Naive thymus-derived CD4-positive, alpha-beta T cell (primary cell): ENCODE measurements at regions of chr1 and their contacts with region 1.

Region 1: DNA sequence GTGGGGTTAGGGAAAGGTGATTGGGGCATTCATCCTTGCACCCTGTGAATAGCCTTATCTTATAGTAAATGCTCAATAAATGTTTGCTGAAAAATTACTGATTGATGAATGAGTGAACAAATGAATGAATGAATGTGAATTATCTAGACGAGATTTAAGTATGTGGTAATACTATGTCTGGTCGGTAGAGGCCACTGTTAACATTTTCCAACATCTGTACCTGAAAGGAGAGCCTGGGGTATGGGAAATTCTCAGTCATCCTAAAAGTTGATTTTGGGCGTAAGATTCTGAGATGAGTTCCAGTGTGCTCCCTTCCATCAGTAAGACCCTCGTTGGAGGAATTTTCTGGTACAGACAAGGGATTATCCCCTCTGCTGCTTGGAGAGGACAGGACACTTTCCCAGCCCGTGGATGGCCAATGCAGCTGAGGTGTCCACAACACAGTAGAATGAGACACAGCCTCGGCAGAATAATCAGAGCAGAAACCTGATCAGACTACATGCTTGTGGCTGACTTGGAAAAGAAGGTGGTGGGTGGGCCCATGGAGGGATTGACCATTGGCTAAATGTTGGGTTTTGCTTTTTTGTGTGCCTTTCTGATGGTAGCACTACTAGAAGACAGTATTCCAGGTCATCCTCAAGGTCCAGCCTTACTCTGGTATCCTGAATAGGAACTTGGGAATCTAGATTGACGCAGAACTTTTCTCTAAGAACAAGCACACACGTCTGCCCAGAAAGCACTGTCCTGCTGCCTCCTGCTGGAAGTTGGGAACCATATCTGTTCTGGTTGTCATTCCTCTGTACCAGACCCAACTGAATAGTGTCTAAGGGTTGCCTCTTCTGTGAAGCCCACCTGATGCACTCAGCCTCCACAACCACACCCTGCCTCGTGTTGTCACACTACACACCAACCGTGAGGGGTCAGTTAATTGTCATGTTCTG is 262.0 kb downstream of the TNR start:
- DNase-seq: no peak
- ATAC-seq: no peak
- H3K4me3 ChIP-seq: no peak overlapping the region
- H3K4me3 Mint-ChIP-seq: no peak overlapping the region
- H3K27ac ChIP-seq: no peak overlapping the region
- H3K27ac Mint-ChIP-seq: no peak overlapping the region
- H3K4me1 ChIP-seq: no peaks in the 10 kb centered on the region
- H3K4me1 Mint-ChIP-seq: no peaks in the 10 kb centered on the region
- H3K27me3 ChIP-seq: no peaks in the 10 kb centered on the region
- H3K27me3 Mint-ChIP-seq: peaks cover 10 to 30% (median 22%) of the 10 kb centered on the region in 5 donors

Region 2: GRCh38 chr1:175471039-175471800 is 10.2 kb before region 1 on chr1:
- CTCF ChIA-PET with region 1: no interaction called
- POLR2A ChIA-PET with region 1: no interaction called
- intact Hi-C with region 1: no loop called
- DNase-seq: no peak
- ATAC-seq: no peak
- H3K4me3 ChIP-seq: no peak overlapping the region
- H3K4me3 Mint-ChIP-seq: no peak overlapping the region
- H3K27ac ChIP-seq: no peak overlapping the region
- H3K27ac Mint-ChIP-seq: no peak overlapping the region
- H3K4me1 ChIP-seq: no peaks in the 10 kb centered on the region
- H3K4me1 Mint-ChIP-seq: no peaks in the 10 kb centered on the region
- H3K27me3 ChIP-seq: no peaks in the 10 kb centered on the region
- H3K27me3 Mint-ChIP-seq: peaks cover 26 to 56% (median 38%) of the 10 kb centered on the region in 5 donors

Region 3: DNA sequence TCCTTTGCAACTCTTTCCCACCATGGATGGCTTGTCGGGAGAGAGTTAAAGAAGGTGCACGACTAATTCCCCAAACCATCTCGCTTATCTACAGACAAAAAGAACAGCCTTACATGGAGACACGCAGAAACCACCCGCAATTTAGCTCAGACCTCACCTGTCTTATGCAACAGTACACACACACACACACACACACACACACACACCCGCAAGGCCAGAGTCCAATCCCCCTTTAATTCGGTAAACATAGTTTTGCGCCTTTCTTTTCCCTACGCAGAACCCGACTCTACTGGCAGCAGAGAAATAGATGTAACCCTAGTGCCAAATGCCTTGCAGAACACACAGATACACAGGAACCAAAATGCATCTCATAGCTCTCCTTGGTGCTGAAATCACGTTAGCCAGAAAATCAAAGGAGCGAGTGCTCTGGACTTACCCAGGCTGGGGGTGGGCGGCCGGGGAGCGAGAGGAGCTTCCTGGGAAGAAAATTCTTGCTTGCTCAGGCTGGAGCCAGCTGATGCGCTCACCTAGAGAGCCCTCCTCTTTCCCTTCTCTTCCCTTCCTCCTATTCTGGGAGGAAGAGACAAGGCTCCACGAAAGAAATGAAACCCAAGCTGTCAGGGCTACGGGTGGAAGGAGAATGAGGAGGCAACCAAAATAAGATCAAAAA is 261.5 kb after region 1 on chr1:
- CTCF ChIA-PET with region 1: no interaction called
- POLR2A ChIA-PET with region 1: no interaction called
- intact Hi-C with region 1: loop called in 1 of 2 experiments (anchors 2 kb)
- DNase-seq: no peak
- ATAC-seq: no peak
- H3K4me3 ChIP-seq: no peak overlapping the region
- H3K4me3 Mint-ChIP-seq: no peak overlapping the region
- H3K27ac ChIP-seq: no peak overlapping the region
- H3K27ac Mint-ChIP-seq: no peak overlapping the region
- H3K4me1 ChIP-seq: no peaks in the 10 kb centered on the region
- H3K4me1 Mint-ChIP-seq: peaks cover 0 to 2% (median 0%) of the 10 kb centered on the region in 7 donors
- H3K27me3 ChIP-seq: no peaks in the 10 kb centered on the region
- H3K27me3 Mint-ChIP-seq: peaks cover 23 to 53% (median 42%) of the 10 kb centered on the region in 5 donors

Region 4: GRCh38 chr1:175757381-175758015 is 276.1 kb after region 1 on chr1:
- CTCF ChIA-PET with region 1: no interaction called
- POLR2A ChIA-PET with region 1: no interaction called
- intact Hi-C with region 1: loop called in 1 of 2 experiments (anchors 2 kb)
- DNase-seq: peak in 1 of 9 donors; percentile 28
- ATAC-seq: no peak
- H3K4me3 ChIP-seq: no peak overlapping the region
- H3K4me3 Mint-ChIP-seq: no peak overlapping the region
- H3K27ac ChIP-seq: no peak overlapping the region
- H3K27ac Mint-ChIP-seq: no peak overlapping the region
- H3K4me1 ChIP-seq: no peaks in the 10 kb centered on the region
- H3K4me1 Mint-ChIP-seq: no peaks in the 10 kb centered on the region
- H3K27me3 ChIP-seq: no peaks in the 10 kb centered on the region
- H3K27me3 Mint-ChIP-seq: peaks cover 0 to 25% (median 9%) of the 10 kb centered on the region in 5 donors